ENCODE measurements at regions of chr3 and their contacts with region 1.

Region 1: DNA sequence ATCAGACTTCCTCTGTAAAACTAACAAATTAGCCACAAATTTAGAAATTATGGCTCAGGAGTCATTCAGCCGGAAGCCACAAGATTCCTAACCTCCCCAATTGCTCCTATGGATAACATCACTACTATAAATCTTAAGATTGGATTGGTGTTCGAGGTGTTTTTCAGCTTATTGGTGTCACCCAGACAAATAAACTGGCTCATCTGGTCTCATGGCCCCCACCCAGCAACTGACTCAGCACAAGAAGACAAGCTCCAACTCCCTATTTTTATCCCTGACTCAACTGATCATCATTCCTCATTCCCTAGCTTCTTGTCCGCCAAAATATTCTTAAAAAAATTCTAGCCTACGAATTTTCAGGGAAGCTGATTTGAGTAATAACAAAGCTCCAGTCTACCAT is 135.1 kb upstream of the STRIT1 start:
- DNase-seq: no peak
- H3K4me3 Mint-ChIP-seq: no peak overlapping the region
- H3K27ac Mint-ChIP-seq: peak overlapping the region; percentile 6
- H3K4me1 Mint-ChIP-seq: peaks cover 9% of the 10 kb centered on the region
- H3K27me3 Mint-ChIP-seq: no peaks in the 10 kb centered on the region
- CTCF ChIP-seq: no peak

Region 2: DNA sequence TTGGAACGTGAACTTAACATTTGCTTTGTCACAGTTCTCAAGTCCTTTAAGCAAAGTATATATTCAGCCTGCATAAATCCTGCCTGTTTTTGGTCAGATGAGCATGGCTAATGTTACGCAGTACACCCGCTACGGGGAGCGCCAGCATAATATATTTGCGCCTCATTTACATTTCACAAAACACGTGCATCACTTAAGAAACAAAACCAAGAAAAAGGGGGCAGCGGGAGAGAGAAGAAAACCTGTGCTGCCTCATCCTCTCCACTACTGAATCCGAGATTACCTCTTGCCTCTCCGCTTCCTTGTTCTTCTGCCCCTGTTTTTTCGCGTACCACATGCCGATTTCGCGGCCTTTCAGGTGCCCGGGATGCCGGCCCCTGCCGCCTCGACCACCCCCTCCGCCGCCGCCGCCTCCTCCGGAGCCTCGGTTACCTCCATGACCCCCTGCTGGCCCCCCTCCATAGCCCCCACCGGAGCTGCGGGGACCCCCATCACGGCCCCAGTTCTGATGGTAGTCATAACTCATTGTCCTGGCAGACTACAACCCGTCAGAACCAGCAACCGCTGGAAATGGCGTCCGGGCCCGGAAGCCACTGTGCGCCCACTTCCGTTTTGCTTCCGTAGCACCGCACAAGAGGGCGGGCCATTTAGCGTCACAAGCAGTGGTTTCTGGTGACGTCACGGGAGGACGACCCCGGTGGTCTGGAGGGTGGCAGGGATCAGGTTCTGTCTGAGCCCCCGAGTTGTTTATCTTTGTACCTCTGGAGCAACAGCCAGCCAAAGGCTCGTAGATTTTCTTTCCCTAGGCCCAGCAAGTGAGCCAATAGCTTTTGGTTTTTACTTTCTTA is 1104.4 kb before region 1 on chr3 and contains the start of gene DHX36:
- CTCF ChIA-PET with region 1: interaction called, 10 read pairs
- POLR2A ChIA-PET with region 1: no interaction called
- intact Hi-C with region 1: no loop called
- DNase-seq: peak; percentile 84
- H3K4me3 Mint-ChIP-seq: peak within 1 kb of the TSS; percentile 87
- H3K27ac Mint-ChIP-seq: peak within 1 kb of the TSS; percentile 99
- H3K4me1 Mint-ChIP-seq: peaks cover 10% of the 10 kb centered on the region
- H3K27me3 Mint-ChIP-seq: no peaks in the 10 kb centered on the region
- CTCF ChIP-seq: no peak
- total RNA-seq, gene DHX36: 93.5 and 108 TPM in 2 replicates

Region 3: DNA sequence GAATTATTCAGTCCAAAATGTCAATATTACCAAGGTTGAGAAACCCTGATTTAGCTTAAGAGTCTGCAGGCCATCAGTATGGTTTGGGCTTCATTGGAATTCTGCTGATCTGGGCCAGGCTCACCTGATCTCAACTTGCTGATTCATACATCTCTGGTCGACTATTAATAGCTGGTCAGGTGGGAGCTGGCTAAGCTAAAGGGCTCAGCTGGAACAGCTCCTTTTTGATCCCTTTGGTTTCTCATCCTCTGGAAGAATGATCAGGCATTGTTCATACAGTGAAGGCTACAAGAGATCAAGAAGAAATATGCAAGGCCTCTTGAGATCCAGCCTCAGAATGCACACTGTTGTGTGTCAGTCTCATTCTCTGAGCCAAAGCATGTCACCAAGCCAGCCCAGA is 471.7 kb before region 1 on chr3:
- CTCF ChIA-PET with region 1: no interaction called
- POLR2A ChIA-PET with region 1: no interaction called
- intact Hi-C with region 1: no loop called
- DNase-seq: peak; percentile 11
- H3K4me3 Mint-ChIP-seq: no peak overlapping the region
- H3K27ac Mint-ChIP-seq: peak overlapping the region; percentile 32
- H3K4me1 Mint-ChIP-seq: peaks cover 11% of the 10 kb centered on the region
- H3K27me3 Mint-ChIP-seq: no peaks in the 10 kb centered on the region
- CTCF ChIP-seq: no peak

Region 4: DNA sequence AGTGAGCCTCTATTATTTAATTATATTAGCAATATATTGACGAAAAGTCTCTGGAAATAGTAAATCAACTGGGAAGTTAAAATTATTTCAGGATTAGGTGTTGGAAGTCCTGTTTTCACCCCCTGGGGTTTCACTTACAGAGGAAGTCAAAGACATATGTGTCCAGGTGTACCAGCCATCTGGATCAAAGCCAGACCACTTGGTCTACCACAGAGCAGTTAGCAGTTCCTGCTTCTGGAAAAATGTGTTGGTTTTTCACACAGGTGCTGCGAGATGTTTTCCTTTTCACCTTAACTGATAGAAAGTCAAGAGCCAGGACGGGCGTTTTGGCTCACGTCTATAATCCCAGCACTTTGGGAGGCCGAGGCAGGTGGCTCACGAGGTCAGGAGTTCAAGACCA is 335.3 kb before region 1 on chr3:
- CTCF ChIA-PET with region 1: no interaction called
- POLR2A ChIA-PET with region 1: no interaction called
- intact Hi-C with region 1: no loop called
- DNase-seq: no peak
- H3K4me3 Mint-ChIP-seq: no peak overlapping the region
- H3K27ac Mint-ChIP-seq: no peak overlapping the region
- H3K4me1 Mint-ChIP-seq: peaks cover 4% of the 10 kb centered on the region
- H3K27me3 Mint-ChIP-seq: no peaks in the 10 kb centered on the region
- CTCF ChIP-seq: no peak

Region 5: GRCh38 chr3:155202621-155203020 is 225.9 kb before region 1 on chr3:
- CTCF ChIA-PET with region 1: no interaction called
- POLR2A ChIA-PET with region 1: no interaction called
- intact Hi-C with region 1: no loop called
- DNase-seq: peak; percentile 22
- H3K4me3 Mint-ChIP-seq: no peak overlapping the region
- H3K27ac Mint-ChIP-seq: peak overlapping the region; percentile 9
- H3K4me1 Mint-ChIP-seq: no peaks in the 10 kb centered on the region
- H3K27me3 Mint-ChIP-seq: no peaks in the 10 kb centered on the region
- CTCF ChIP-seq: no peak